Lower leg skin (tissue), 4 donors: ENCODE measurements at regions of chr14 and their contacts with region 1.

Region 1: DNA sequence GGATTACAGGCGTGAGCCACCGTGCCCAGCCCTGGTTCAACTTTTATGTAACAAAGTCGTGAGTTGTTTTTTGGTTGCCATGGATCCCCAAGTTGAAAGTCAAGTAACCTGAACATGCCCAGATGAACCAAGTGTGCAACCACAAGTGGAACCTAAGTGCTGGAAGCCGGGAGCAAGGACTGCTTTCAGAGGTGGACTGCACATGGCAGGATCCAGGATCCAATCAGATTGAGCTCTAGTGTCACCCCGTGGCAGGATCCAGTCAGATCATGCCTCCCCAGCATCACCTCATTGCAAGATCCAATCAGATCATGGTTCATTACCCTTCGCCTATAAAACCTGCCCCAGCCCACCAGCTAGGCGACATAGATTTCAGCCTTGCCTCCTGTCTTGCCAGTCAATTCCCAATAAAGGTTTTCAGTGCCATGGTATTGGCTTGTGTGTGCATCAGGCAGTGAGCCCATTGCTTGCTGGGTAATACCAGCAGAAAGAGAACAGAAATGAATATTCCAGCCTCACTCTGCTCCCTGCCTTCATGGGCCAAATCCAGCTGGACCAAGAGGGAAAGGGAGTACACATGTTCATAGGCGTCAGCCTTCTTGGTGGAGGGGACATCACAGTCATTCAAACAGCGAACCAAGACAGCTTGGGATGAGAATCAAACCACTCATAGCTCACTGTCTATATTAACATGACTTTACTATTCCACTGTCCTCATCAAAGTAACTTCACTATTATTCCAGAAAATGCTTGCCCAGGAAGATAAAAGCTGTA is 43.6 kb upstream of the VASH1 start:
- DNase-seq: no peak
- H3K4me3 ChIP-seq: no peak overlapping the region
- CTCF ChIP-seq: no peak
- POLR2A ChIP-seq: no peak

Region 2: DNA sequence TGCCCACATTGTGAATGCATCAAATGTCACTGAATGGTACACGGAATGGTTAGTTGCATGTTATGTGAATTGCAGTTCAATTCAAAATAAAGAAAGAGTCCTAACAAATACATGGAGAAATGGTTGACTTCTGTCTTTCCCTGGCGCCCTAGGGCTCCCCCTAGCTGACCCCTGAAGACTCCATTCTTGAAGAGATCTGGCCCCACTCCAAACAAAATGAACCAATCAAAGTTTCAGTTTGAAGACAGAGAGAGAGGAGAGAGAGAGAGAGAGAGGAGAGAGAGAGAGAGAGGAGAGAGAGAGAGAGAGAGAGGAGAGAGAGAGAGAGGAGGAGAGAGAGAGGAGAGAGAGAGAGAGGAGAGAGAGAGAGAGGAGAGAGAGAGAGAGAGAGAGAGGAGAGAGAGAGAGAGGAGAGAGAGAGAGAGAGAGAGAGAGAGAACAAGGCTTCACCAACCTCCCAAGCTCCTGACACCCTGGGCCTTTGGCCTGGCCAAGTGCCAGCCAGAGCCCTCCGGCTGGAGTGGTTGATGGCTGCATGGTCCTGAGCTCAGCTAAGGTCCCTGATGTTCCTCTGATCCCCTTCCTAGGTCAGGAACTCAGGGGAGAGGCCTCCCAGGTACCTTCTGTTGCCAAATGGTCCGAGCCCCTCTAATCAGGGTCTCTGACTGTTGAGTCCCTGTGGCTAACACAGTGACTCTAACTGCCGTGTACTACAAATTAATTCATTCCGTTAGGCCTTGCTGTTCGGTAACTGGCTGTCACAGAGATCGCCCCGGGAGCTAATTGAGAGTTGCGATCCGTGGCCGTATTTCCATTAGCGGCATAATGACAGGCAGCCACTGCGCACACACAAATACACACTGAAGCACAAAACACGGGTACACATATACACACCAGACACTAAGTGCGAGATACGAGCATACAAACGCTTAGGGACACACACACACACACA is 153.0 kb before region 1 on chr14:
- intact Hi-C with region 1: no loop called
- DNase-seq: no peak
- H3K4me3 ChIP-seq: no peak overlapping the region
- CTCF ChIP-seq: no peak
- POLR2A ChIP-seq: no peak

Region 3: DNA sequence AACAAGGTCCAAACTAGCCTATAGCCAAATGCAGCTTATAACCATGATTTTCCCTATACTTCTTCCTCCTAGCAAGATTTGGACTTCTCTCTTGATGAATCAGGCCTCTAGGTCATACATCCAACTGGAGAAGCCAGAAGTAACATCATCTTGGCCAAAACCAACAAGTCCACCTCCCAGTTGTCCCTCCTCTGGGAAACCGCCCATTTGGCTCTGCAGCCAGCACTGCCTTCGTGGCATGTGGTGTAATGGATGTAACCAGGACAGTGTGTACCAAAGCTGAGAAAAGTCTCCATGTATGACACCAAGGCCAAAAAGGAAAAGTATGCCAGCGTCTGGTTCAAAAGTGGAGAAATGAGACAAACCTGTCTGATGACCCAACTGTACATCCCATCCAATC is 15.7 kb before region 1 on chr14:
- intact Hi-C with region 1: loop called (anchors 1 kb)
- DNase-seq: peak; percentile 71 to 82
- H3K4me3 ChIP-seq: no peak overlapping the region
- CTCF ChIP-seq: no peak
- POLR2A ChIP-seq: no peak

Region 4: GRCh38 chr14:77111043-77111442 is 393.3 kb after region 1 on chr14:
- intact Hi-C with region 1: no loop called
- DNase-seq: no peak
- H3K4me3 ChIP-seq: no peak overlapping the region
- CTCF ChIP-seq: no peak
- POLR2A ChIP-seq: no peak